CD8-positive, alpha-beta memory T cell (primary cell): ENCODE measurements at regions of chr17 and their contacts with region 1.

Region 1: DNA sequence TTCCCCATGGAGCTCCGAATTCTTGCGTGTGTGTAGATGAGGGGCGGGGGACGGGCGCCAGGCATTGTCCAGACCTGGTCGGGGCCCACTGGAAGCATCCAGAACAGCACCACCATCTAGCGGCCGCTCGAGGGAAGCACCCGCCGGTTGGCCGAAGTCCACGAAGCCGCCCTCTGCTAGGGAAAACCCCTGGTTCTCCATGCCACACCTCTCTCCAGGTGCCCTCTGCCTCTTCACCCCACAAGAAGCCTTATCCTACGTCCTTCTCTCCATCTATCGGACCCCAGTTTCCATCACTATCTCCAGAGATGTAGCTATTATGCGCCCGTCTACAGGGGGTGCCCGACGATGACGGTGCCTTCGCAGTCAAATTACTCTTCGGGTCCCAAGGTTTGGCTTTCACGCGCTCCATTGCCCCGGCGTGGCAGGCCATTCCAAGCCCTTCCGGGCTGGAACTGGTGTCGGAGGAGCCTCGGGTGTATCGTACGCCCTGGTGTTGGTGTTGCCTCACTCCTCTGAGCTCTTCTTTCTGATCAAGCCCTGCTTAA is 617 bp upstream of the SENP3 start:
- DNase-seq: peak; percentile 74 to 85 (median 81)
- H3K4me3 ChIP-seq: peak overlapping the region; percentile 95
- H3K4me3 Mint-ChIP-seq: peak overlapping the region; percentile 88 to 97 (median 89)
- H3K27ac ChIP-seq: peak overlapping the region; percentile 94
- H3K27ac Mint-ChIP-seq: peak overlapping the region; percentile 91 to 99 (median 98)
- H3K4me1 ChIP-seq: peaks cover 37% of the 10 kb centered on the region
- H3K4me1 Mint-ChIP-seq: peaks cover 23 to 33% (median 25%) of the 10 kb centered on the region in 3 donors
- H3K27me3 ChIP-seq: no peaks in the 10 kb centered on the region
- H3K27me3 Mint-ChIP-seq: peaks cover 0 to 4% of the 10 kb centered on the region in 2 donors

Region 2: DNA sequence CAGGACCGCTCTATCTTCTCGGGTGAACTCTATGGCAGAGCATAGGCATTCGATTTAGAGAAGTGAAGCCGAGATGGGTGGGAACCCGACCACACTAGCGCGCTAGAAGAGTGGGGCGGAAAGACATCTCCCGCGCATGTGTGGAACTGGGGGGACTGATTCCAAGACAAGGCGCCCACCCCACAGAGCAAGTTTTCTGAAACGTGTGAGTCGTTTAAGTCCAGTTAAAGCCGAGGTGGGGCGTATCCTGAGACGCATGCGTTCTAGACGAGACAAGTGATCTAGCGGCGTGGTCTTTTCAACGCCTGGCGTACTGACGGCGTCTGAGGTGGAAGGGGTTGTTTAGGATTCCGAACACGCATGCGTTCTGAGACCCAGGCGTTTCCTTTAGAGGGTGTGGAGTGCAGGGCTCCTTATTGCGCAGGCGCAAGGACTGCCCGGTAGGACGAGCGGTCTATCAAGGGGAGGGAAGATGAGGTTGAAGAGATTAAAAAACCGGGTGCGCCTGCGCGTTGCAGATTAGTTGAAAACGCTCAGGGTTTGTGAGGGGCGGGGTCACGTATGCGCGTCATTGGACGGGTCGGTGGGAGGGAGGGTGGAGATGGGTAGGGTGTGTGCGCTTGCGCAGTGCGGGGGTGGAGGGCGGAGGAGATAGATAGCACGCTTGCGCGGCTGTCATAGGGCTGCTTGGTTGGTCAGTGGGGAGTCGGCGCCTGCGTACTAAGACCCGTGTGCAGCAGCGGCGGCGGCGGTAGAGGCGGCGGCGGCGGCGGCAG is 254.0 kb before region 1 on chr17 and contains the start of gene EIF5A:
- CTCF ChIA-PET with region 1: no interaction called
- POLR2A ChIA-PET with region 1: no interaction called
- DNase-seq: peak; percentile 100
- H3K4me3 ChIP-seq: peak within 1 kb of the TSS; percentile 62
- H3K4me3 Mint-ChIP-seq: peak within 1 kb of the TSS; percentile 92 to 99 (median 95)
- H3K27ac ChIP-seq: peak within 1 kb of the TSS; percentile 98
- H3K27ac Mint-ChIP-seq: peak within 1 kb of the TSS; percentile 97 to 99 (median 99)
- H3K4me1 ChIP-seq: peaks cover 30% of the 10 kb centered on the region
- H3K4me1 Mint-ChIP-seq: peaks cover 36 to 39% (median 38%) of the 10 kb centered on the region in 3 donors
- H3K27me3 ChIP-seq: no peaks in the 10 kb centered on the region
- H3K27me3 Mint-ChIP-seq: peaks cover 0 to 5% of the 10 kb centered on the region in 2 donors
- total RNA-seq, gene EIF5A: 1,533 to 1,595 TPM

Region 3: GRCh38 chr17:7351665-7352501 is 209.2 kb before region 1 on chr17 and contains the start of gene KCTD11:
- CTCF ChIA-PET with region 1: interaction called, 38 read pairs
- POLR2A ChIA-PET with region 1: interaction called, 8 read pairs
- DNase-seq: peak; percentile 62 to 90 (median 80)
- H3K4me3 ChIP-seq: peak within 1 kb of the TSS; percentile 52
- H3K4me3 Mint-ChIP-seq: peak within 1 kb of the TSS; percentile 83 to 93 (median 87)
- H3K27ac ChIP-seq: peak within 1 kb of the TSS; percentile 67
- H3K27ac Mint-ChIP-seq: peak within 1 kb of the TSS; percentile 90 to 98 (median 96)
- H3K4me1 ChIP-seq: peaks cover 30% of the 10 kb centered on the region
- H3K4me1 Mint-ChIP-seq: peaks cover 32 to 65% (median 34%) of the 10 kb centered on the region in 3 donors
- H3K27me3 ChIP-seq: no peaks in the 10 kb centered on the region
- H3K27me3 Mint-ChIP-seq: no peaks in the 10 kb centered on the region
- total RNA-seq, gene KCTD11: 4.6 to 5.1 TPM

Region 4: GRCh38 chr17:7508190-7508589 is 52.9 kb before region 1 on chr17:
- CTCF ChIA-PET with region 1: interaction called, 75 read pairs
- POLR2A ChIA-PET with region 1: no interaction called
- DNase-seq: no peak
- H3K4me3 ChIP-seq: no peak overlapping the region
- H3K4me3 Mint-ChIP-seq: no peak overlapping the region
- H3K27ac ChIP-seq: no peak overlapping the region
- H3K27ac Mint-ChIP-seq: peak overlapping the region in 1 of 8 donors; percentile 75
- H3K4me1 ChIP-seq: no peaks in the 10 kb centered on the region
- H3K4me1 Mint-ChIP-seq: no peaks in the 10 kb centered on the region
- H3K27me3 ChIP-seq: no peaks in the 10 kb centered on the region
- H3K27me3 Mint-ChIP-seq: no peaks in the 10 kb centered on the region

Region 5: DNA sequence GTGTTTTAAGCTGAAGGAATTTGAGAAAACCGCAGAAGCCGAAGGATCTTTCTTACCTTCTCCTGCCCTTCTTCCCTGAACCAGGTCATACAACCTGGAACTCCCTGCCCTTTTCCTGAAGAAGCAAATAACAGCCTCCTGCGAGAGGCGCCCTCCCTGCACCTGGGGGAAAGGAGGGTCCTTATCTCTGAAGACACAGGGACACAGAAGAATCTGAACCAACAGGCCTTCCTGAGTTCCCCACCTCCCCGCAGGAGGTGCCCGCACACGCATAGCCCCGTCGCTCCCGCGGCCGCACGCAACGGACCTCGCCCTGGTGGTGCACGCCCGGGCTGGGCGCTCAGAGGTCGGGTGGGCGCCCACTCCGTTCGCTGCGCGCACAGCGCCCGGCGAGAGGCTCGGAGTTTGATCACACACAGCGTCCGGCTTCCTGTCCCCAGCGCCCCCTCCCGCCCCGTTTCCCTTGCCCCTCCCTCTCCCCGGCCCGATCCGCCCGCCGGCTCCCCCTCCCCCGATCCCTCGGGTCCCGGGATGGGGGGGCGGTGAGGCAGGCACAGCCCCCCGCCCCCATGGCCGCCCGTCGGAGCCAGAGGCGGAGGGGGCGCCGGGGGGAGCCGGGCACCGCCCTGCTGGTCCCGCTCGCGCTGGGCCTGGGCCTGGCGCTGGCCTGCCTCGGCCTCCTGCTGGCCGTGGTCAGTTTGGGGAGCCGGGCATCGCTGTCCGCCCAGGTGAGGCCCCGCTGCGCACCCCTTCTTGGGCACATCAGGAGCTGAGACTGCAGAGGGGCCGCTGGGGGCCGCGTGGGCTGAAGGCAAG is 12.3 kb before region 1 on chr17 and contains the start of gene TNFSF12:
- CTCF ChIA-PET with region 1: interaction called, 42 read pairs
- POLR2A ChIA-PET with region 1: interaction called, 4 read pairs
- DNase-seq: peak; percentile 43 to 75 (median 45)
- H3K4me3 ChIP-seq: peak within 1 kb of the TSS; percentile 90
- H3K4me3 Mint-ChIP-seq: peak within 1 kb of the TSS; percentile 84 to 94 (median 89)
- H3K27ac ChIP-seq: peak within 1 kb of the TSS; percentile 45
- H3K27ac Mint-ChIP-seq: peak within 1 kb of the TSS; percentile 76 to 97 (median 93)
- H3K4me1 ChIP-seq: peaks cover 45% of the 10 kb centered on the region
- H3K4me1 Mint-ChIP-seq: peaks cover 38 to 51% (median 46%) of the 10 kb centered on the region in 3 donors
- H3K27me3 ChIP-seq: no peaks in the 10 kb centered on the region
- H3K27me3 Mint-ChIP-seq: peaks cover 0 to 4% of the 10 kb centered on the region in 2 donors
- total RNA-seq, gene TNFSF12: 18.6 to 22.5 TPM

Region 6: GRCh38 chr17:7589204-7589868 is 28.2 kb after region 1 on chr17:
- CTCF ChIA-PET with region 1: interaction called, 15 read pairs
- POLR2A ChIA-PET with region 1: interaction called, 6 read pairs
- DNase-seq: peak; percentile 37 to 76 (median 47)
- H3K4me3 ChIP-seq: no peak overlapping the region
- H3K4me3 Mint-ChIP-seq: peak overlapping the region in 1 of 7 donors; percentile 65
- H3K27ac ChIP-seq: no peak overlapping the region
- H3K27ac Mint-ChIP-seq: peak overlapping the region in 1 of 8 donors; percentile 83
- H3K4me1 ChIP-seq: peaks cover 8% of the 10 kb centered on the region
- H3K4me1 Mint-ChIP-seq: peaks cover 7 to 13% (median 12%) of the 10 kb centered on the region in 3 donors
- H3K27me3 ChIP-seq: no peaks in the 10 kb centered on the region
- H3K27me3 Mint-ChIP-seq: no peaks in the 10 kb centered on the region